ENCODE measurements at regions of chr19 and their contacts with region 1.

Region 1: GRCh38 chr19:4182084-4182810 is at the starts of genes ANKRD24 and SIRT6:
- DNase-seq: peak; percentile 97
- H3K4me3 Mint-ChIP-seq: peak within 1 kb of the TSS; percentile 97
- H3K27ac Mint-ChIP-seq: peak within 1 kb of the TSS; percentile 93
- H3K4me1 Mint-ChIP-seq: peaks cover 34% of the 10 kb centered on the region
- H3K27me3 Mint-ChIP-seq: no peaks in the 10 kb centered on the region
- total RNA-seq, gene ANKRD24: 2.5 to 2.6 TPM
- total RNA-seq, gene SIRT6: 20.0 to 20.1 TPM

Region 2: DNA sequence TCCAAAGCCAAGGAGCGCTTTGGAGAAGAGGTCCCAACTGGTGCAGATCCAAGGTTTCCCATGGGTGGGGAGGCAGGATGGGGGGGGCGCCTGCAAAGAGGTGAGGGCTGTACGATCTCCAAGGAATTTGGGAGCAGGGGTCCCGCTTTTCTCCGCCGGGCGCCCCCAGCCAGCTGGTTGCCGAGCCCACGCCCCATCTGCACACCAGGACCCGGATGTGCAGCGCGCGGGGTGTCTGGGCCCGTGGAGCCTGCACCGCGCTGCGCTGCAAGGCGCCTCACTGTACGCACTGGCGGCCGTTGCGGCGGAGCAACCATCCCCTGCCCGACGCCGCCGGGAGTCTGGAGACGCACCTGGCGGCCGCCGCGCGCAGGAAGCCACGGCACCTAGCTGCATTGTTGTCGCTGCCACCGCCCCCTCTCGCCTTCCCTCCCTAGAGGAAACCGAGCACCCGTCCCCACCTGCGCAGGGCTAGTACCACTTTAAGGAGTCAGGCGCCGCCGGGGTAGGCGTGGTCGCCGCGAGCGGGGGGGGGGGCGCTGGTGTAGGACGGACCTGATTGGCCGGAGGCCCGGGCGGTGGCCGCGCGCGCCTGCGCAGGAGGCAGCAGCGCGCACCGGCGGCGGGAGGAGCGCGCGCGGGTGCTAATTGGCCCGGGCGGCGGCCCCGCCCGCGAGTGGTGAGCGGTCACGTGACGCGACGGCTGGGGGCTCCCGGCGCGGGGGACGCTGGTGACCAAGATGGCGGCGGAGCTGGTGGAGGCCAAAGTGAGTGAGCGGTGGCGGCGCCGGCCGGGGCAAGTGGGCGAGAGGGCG is 175.0 kb before region 1 on chr19 and contains the start of gene PIAS4:
- CTCF ChIA-PET with region 1: no interaction called
- intact Hi-C with region 1: loop called (anchors 1 kb)
- DNase-seq: peak; percentile 96
- H3K4me3 Mint-ChIP-seq: peak within 1 kb of the TSS; percentile 84
- H3K27ac Mint-ChIP-seq: peak within 1 kb of the TSS; percentile 79
- H3K4me1 Mint-ChIP-seq: peaks cover 31% of the 10 kb centered on the region
- H3K27me3 Mint-ChIP-seq: no peaks in the 10 kb centered on the region
- total RNA-seq, gene PIAS4: 16.1 to 20.1 TPM

Region 3: DNA sequence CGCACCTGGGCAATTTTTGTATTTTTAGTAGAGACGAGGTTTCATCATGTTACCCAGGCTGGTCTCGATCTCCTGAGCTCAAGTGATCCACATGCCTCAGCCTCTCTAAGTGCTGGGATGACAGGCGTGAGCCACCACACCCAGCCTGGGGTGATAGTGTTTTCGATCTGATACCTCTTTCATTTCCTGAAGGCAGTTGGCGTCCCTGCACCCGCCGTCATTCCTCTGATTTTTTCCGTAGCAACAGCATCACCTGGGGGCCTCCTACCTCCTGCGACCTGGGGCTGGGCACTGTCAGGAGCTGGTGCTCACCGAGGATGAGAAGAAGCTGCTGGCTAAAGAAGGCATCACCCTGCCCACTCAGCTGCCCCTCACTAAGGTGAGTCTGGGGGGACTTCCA is 18.0 kb before region 1 on chr19:
- CTCF ChIA-PET with region 1: interaction called, 3 read pairs
- intact Hi-C with region 1: loop called (anchors 2 kb)
- DNase-seq: no peak
- H3K4me3 Mint-ChIP-seq: no peak overlapping the region
- H3K27ac Mint-ChIP-seq: no peak overlapping the region
- H3K4me1 Mint-ChIP-seq: no peaks in the 10 kb centered on the region
- H3K27me3 Mint-ChIP-seq: peaks cover 8% of the 10 kb centered on the region

Region 4: GRCh38 chr19:4304530-4305252 is 122.4 kb after region 1 on chr19 and contains the start of gene FSD1:
- CTCF ChIA-PET with region 1: no interaction called
- intact Hi-C with region 1: no loop called
- DNase-seq: peak; percentile 79
- H3K4me3 Mint-ChIP-seq: peak within 1 kb of the TSS; percentile 71
- H3K27ac Mint-ChIP-seq: peak within 1 kb of the TSS; percentile 84
- H3K4me1 Mint-ChIP-seq: peaks cover 34% of the 10 kb centered on the region
- H3K27me3 Mint-ChIP-seq: no peaks in the 10 kb centered on the region
- total RNA-seq, gene FSD1: 12.3 to 17.5 TPM